ENCODE measurements at regions of chr3 and their contacts with region 1.

Region 1: DNA sequence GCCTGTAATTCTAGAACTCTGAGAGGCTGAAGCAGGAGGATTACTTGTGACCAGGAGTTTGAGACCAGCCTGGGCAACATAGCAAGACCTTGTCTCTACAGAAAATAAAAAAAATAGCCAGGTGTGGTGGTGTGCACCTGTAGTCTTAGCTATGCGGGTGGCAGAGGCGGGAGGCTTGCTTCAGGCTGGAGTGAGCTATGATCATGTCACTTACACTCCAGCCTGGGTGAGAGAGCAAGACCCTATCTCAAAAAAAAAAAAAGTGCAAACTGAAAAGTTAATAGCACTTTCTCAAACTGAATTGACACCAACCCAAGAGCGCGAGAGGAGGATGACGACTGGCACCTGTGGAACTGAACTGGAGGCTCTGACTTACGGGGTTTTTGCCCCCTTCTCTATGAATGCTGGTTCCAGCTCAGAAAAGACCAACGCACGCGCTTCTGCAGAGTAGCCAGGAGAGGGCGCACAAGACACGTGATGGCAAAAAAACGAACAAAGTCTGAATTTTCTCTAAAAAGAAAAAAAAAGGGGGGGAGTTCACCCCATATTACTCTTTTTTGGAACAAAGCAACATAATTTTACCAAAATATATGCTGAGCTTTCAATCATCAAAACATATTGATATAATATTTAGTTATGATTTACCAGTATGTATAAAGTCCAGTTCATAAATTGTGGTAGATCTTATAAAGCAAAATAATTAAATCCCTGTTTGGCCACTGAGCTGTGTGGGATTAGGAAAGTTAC is 23.7 kb downstream of the CFAP92 start:
- DNase-seq: peak in 1 of 2 donors; percentile 61
- ATAC-seq: peak; percentile 80
- H3K4me3 ChIP-seq: no peak overlapping the region
- H3K27ac ChIP-seq: no peak overlapping the region
- H3K4me1 ChIP-seq: no peaks in the 10 kb centered on the region
- H3K27me3 ChIP-seq: no peaks in the 10 kb centered on the region

Region 2: DNA sequence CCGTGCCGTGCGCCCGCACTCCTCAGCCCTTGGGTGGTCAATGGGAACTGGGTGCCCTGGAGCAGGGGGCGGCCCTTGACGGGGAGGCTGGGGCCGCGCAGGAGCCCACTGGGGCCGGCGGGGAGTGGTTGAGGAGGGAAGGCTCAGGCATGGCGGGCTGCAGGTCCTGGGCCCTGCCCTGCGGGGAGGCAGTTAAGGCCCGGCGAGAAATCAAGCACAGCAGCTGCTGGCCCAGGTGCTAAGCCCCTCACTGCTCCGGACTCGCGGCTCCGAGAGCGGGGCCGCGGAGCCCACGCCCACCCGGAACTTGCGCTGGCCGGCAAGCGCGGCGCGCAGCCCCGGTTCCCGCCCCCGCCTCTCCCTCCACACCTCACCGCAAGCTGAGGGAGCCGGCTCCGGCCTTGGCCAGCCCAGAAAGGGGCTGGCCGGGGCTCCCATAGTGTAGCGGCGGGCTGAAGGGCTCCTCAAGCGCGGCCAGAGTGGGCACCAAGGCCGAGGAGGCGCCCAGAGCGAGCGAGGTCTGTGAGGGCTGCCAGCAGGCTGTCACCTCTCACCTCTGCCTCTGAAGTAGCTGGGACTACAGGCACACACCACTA is 98.2 kb after region 1 on chr3:
- intact Hi-C with region 1: no loop called
- DNase-seq: peak in 1 of 2 donors; percentile 55
- ATAC-seq: no peak
- H3K4me3 ChIP-seq: no peak overlapping the region
- H3K27ac ChIP-seq: no peak overlapping the region
- H3K4me1 ChIP-seq: no peaks in the 10 kb centered on the region
- H3K27me3 ChIP-seq: no peaks in the 10 kb centered on the region

Region 3: GRCh38 chr3:129095285-129095684 is 125.1 kb after region 1 on chr3:
- intact Hi-C with region 1: loop called in 1 of 2 experiments (anchors 10 kb)
- DNase-seq: no peak
- ATAC-seq: no peak
- H3K4me3 ChIP-seq: no peak overlapping the region
- H3K27ac ChIP-seq: no peak overlapping the region
- H3K4me1 ChIP-seq: no peaks in the 10 kb centered on the region
- H3K27me3 ChIP-seq: no peaks in the 10 kb centered on the region

Region 4: GRCh38 chr3:129249276-129250065 is 279.3 kb after region 1 on chr3 and contains the start of gene COPG1:
- intact Hi-C with region 1: loop called (anchors 2 to 5 kb)
- DNase-seq: peak; percentile 90 to 95
- ATAC-seq: peak; percentile 97
- H3K4me3 ChIP-seq: peak within 1 kb of the TSS; percentile 61 to 75
- H3K27ac ChIP-seq: peak within 1 kb of the TSS in 1 of 2 donors; percentile 64
- H3K4me1 ChIP-seq: peaks cover 0 to 2% of the 10 kb centered on the region in 2 donors
- H3K27me3 ChIP-seq: no peaks in the 10 kb centered on the region
- total RNA-seq, gene COPG1: 149 to 155 TPM

Measured in aorta (tissue), 5 donors.